ENCODE measurements at regions of chr2 and their contacts with region 1.

Region 1: GRCh38 chr2:118309946-118310680 is 221.8 kb downstream of the INSIG2 start:
- DNase-seq: peak; percentile 78
- H3K4me3 Mint-ChIP-seq: peak overlapping the region; percentile 79
- H3K27ac Mint-ChIP-seq: peak overlapping the region; percentile 88
- H3K4me1 Mint-ChIP-seq: peaks cover 8% of the 10 kb centered on the region
- H3K27me3 Mint-ChIP-seq: peaks cover 2% of the 10 kb centered on the region

Region 2: DNA sequence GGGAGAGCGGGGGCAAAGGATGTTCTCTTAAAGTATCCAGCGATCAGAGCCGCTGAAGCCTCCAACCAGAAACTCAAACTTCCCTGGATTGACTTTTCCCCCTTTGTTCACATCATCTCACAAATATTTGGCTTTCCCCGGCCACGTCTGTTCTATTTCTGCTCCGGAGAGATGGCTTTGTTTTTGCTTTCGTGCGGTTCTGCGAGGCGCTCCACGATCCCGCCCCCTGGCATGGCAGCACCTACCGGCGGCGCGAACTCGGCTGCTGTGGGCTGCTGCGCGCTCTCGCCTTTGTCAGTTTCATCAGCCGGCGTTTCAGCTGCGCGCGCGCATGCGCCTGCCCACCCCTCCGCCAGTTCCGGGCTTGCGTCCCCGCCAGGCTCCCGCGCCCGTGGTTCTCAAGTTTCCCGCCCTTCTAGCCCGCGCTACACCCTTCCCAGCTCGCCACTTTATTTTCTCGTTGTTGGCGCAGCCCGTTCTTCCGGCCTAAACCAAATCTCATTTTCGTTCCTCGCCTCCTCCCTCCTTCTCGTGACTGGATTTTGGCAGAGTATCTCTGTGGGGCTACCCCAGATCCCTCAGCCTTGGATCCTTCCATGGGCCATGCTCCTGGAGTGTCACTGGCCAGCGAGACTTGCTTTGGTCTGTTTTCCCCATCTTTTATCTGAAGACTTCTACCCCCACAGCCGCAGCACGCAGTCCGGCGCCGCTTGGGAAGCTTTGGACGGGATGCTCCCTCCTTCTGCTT is 123.8 kb before region 1 on chr2:
- CTCF ChIA-PET with region 1: no interaction called
- POLR2A ChIA-PET with region 1: interaction called, 3 read pairs
- intact Hi-C with region 1: loop called (anchors 1 kb)
- DNase-seq: peak; percentile 92
- H3K4me3 Mint-ChIP-seq: peak overlapping the region; percentile 93
- H3K27ac Mint-ChIP-seq: peak overlapping the region; percentile 94
- H3K4me1 Mint-ChIP-seq: peaks cover 11% of the 10 kb centered on the region
- H3K27me3 Mint-ChIP-seq: no peaks in the 10 kb centered on the region